ENCODE measurements at regions of chr16 and their contacts with region 1.

Region 1: GRCh38 chr16:10256784-10257641 is 74.8 kb upstream of the GRIN2A start:
- DNase-seq: peak in 1 of 2 donors; percentile 12
- ATAC-seq: peak in 1 of 2 donors; percentile 58
- H3K4me3 ChIP-seq: no peak overlapping the region
- H3K27ac ChIP-seq: no peak overlapping the region
- H3K4me1 ChIP-seq: no peaks in the 10 kb centered on the region
- H3K27me3 ChIP-seq: peaks cover 0 to 3% (median 3%) of the 10 kb centered on the region in 3 donors
- CTCF ChIP-seq: peak; percentile 24 to 77 (median 65)
- POLR2A ChIP-seq: no peak

Region 2: DNA sequence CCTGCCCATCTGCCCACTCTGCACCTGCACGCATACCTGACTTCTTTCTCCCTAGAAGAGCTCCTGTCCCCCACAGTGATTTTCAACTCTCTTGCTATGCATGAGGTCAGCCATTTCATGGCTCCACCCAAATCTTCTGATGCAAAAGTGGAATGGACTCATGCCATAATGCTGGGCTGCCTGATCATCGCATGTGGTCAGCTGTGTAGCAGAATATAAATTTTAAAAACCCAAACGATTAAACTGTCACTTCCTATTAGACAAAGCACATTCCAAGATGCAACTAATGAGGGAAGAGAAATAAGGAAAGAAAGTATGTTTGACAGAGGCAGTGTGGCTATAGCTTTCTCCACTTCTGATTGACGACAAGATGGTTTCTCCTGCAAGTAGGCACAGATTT is 100.9 kb before region 1 on chr16:
- in situ Hi-C with region 1: no loop called
- intact Hi-C with region 1: no loop called
- DNase-seq: no peak
- ATAC-seq: no peak
- H3K4me3 ChIP-seq: no peak overlapping the region
- H3K27ac ChIP-seq: no peak overlapping the region
- H3K4me1 ChIP-seq: no peaks in the 10 kb centered on the region
- H3K27me3 ChIP-seq: no peaks in the 10 kb centered on the region
- CTCF ChIP-seq: no peak
- POLR2A ChIP-seq: no peak

Region 3: GRCh38 chr16:10297341-10298006 is 40.5 kb after region 1 on chr16:
- in situ Hi-C with region 1: no loop called
- intact Hi-C with region 1: no loop called
- DNase-seq: no peak
- ATAC-seq: no peak
- H3K4me3 ChIP-seq: no peak overlapping the region
- H3K27ac ChIP-seq: no peak overlapping the region
- H3K4me1 ChIP-seq: no peaks in the 10 kb centered on the region
- H3K27me3 ChIP-seq: no peaks in the 10 kb centered on the region
- CTCF ChIP-seq: no peak
- POLR2A ChIP-seq: no peak

Region 4: GRCh38 chr16:10405386-10405939 is 148.4 kb after region 1 on chr16:
- in situ Hi-C with region 1: no loop called
- intact Hi-C with region 1: no loop called
- DNase-seq: no peak
- ATAC-seq: peak; percentile 30 to 63
- H3K4me3 ChIP-seq: no peak overlapping the region
- H3K27ac ChIP-seq: peak overlapping the region in 3 of 4 donors; percentile 59 to 71 (median 64)
- H3K4me1 ChIP-seq: no peaks in the 10 kb centered on the region
- H3K27me3 ChIP-seq: no peaks in the 10 kb centered on the region
- CTCF ChIP-seq: no peak
- POLR2A ChIP-seq: no peak

Region 5: DNA sequence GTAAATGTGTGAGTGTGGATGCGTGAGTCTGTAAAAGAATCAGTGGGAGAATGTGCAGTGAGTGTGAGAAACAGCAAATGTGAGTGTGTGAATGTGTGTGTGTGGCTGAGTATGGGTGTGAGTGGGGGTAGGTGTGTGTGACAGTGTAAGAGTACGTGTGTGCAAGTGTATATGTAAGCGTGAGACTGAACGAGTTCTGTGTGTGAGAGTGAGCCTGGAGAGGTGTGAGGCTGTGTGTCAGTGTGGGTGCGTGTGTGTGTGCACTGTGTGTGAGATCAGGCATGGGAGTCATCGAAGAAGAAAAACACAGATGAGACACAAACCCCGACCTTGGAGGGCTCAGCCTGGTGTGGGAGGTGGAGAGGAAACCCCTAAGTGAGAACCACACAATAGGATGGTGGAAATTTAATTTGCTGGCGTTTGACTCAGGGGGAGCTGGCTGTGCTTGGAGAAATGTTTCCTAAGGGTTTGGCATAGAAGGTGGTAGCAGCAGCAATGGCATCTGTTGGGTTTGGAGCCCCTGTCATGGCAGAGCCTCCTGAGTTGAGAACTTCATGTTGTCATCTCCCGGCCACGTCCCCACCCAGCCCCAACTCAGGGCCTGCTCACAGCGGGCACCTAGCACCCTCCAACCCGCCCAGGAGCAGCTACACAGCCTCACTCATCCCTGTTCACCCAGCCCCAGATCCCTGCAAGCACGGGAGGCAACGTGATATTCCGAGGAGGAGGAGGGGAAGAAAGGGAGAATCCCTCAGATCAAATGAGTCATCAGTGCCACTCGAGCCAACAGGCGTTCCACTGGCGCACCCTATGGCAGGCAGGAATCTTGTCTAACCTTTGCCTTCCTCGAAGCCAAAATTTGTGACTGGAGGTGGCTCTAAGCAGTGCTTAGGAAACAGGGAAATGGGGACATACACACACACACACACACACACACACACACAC is 472.4 kb after region 1 on chr16:
- in situ Hi-C with region 1: loop called in 3 of 4 experiments (anchors 10 kb)
- intact Hi-C with region 1: loop called (anchors 2 kb)
- DNase-seq: peak; percentile 76 to 82
- ATAC-seq: peak; percentile 98 to 99
- H3K4me3 ChIP-seq: no peak overlapping the region
- H3K27ac ChIP-seq: peak overlapping the region in 1 of 4 donors; percentile 67
- H3K4me1 ChIP-seq: peaks cover 7 to 13% of the 10 kb centered on the region in 2 donors
- H3K27me3 ChIP-seq: no peaks in the 10 kb centered on the region
- CTCF ChIP-seq: no peak
- POLR2A ChIP-seq: no peak

Region 6: GRCh38 chr16:10737068-10737625 is 480.1 kb after region 1 on chr16:
- in situ Hi-C with region 1: loop called in 3 of 4 experiments (anchors 10 kb)
- intact Hi-C with region 1: loop called (anchors 1 kb)
- DNase-seq: peak; percentile 36 to 63
- ATAC-seq: peak; percentile 49
- H3K4me3 ChIP-seq: peak overlapping the region in 2 of 4 donors; percentile 21 to 44
- H3K27ac ChIP-seq: peak overlapping the region; percentile 84 to 95 (median 88)
- H3K4me1 ChIP-seq: peaks cover 16 to 22% of the 10 kb centered on the region in 2 donors
- H3K27me3 ChIP-seq: no peaks in the 10 kb centered on the region
- CTCF ChIP-seq: peak; percentile 93 to 96 (median 93)
- POLR2A ChIP-seq: no peak

Measured in gastrocnemius medialis (tissue), 4 donors.